ENCODE measurements at regions of chr1 and their contacts with region 1.

Region 1: GRCh38 chr1:165768513-165769394 is at the start of gene TMCO1:
- DNase-seq: peak; percentile 90 to 99 (median 95)
- ATAC-seq: peak; percentile 96
- H3K4me3 ChIP-seq: peak within 1 kb of the TSS; percentile 73
- H3K27ac ChIP-seq: peak within 1 kb of the TSS; percentile 96
- H3K4me1 ChIP-seq: peaks cover 21 to 44% of the 10 kb centered on the region in 2 experiments
- H3K27me3 ChIP-seq: no peaks in the 10 kb centered on the region
- CTCF ChIP-seq: peak; percentile 27 to 45 (median 35); a peak in 4 of 6 replicates
- EP300 ChIP-seq: peak; percentile 62
- POLR2A ChIP-seq: peak; percentile 98
- RAD21 ChIP-seq: peak in 1 of 2 experiments; percentile 24; a peak in 1 of 4 replicates
- polyA plus RNA-seq, gene TMCO1: 412 to 561 TPM

Region 2: GRCh38 chr1:165753934-165754333 is 14.8 kb before region 1 on chr1:
- CTCF ChIA-PET with region 1: interaction called, 4 read pairs
- POLR2A ChIA-PET with region 1: interaction called, 13 read pairs
- in situ Hi-C with region 1: no loop called
- intact Hi-C with region 1: no loop called
- DNase-seq: no peak
- ATAC-seq: no peak
- H3K4me3 ChIP-seq: no peak overlapping the region
- H3K27ac ChIP-seq: no peak overlapping the region
- H3K4me1 ChIP-seq: no peaks in the 10 kb centered on the region
- H3K27me3 ChIP-seq: no peaks in the 10 kb centered on the region; a peak in 1 of 5 replicates
- CTCF ChIP-seq: no peak
- EP300 ChIP-seq: no peak
- POLR2A ChIP-seq: no peak
- RAD21 ChIP-seq: no peak

Region 3: DNA sequence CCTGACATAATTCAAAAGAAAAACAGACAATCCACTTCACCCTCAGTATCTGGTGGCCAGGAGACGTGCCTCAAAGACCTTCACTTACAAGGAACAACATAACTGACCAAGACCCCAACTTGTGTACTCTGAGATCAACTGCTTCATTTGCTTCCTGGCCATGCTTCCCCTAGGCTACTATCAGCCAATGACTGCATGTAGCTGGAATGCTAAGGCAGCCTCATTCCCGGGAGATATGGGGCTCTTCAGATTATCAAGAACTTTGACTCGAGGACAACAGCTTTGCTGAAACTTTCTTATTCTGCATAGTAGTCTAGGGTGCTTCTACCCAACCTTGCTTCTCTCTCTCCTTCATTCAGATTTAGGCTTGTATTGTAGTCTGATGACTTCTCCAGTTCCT is 47.0 kb after region 1 on chr1:
- CTCF ChIA-PET with region 1: no interaction called
- POLR2A ChIA-PET with region 1: interaction called, 17 read pairs
- in situ Hi-C with region 1: no loop called
- intact Hi-C with region 1: no loop called
- DNase-seq: peak in 3 of 4 experiments; percentile 30 to 51 (median 34)
- ATAC-seq: peak; percentile 37
- H3K4me3 ChIP-seq: no peak overlapping the region
- H3K27ac ChIP-seq: no peak overlapping the region
- H3K4me1 ChIP-seq: peaks cover 16 to 19% of the 10 kb centered on the region in 2 experiments
- H3K27me3 ChIP-seq: no peaks in the 10 kb centered on the region
- CTCF ChIP-seq: no peak
- EP300 ChIP-seq: no peak
- POLR2A ChIP-seq: no peak
- RAD21 ChIP-seq: no peak

Region 4: DNA sequence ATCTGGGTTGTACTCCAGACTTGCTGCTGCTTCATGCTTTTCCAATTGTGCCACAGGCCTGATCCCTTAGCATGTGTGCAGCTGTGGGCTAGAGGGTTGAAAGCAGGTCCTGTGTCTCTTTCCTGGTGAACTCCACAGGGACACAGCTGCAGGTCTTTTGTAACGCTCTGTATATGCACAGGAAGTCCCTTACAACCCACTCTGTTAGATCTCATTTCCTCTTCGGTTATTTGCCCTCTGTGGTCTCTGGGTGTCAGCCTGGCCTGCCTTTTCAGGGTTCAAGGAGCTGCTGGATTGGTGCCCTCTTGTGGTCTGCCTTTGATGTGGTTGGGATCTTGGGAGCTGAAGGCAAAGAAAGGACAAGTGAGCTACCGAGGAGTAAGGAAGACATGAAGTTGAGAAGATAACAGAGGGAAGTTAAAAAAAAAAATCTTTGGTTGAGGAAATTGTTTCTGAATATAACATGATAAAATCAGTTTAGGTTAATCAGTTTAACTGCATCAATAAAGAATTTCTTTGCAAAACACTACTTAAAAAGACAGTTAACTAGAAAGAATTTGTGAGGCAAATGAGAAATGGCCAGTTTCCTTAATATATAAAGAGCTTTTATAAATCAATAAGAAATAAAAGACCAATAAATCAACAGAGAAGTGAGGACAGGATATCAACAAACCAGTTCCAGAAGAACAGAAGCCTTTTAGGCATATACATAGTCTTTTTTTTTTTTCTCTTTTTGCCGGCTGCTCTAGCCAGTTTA is 102.7 kb after region 1 on chr1:
- CTCF ChIA-PET with region 1: no interaction called
- POLR2A ChIA-PET with region 1: interaction called, 4 read pairs
- in situ Hi-C with region 1: no loop called
- intact Hi-C with region 1: loop called (anchors 2 kb)
- DNase-seq: peak; percentile 63 to 86 (median 66)
- ATAC-seq: peak; percentile 90
- H3K4me3 ChIP-seq: no peak overlapping the region
- H3K27ac ChIP-seq: peak overlapping the region; percentile 27; the same call in 1 of the 3 replicates
- H3K4me1 ChIP-seq: peaks cover 2 to 3% of the 10 kb centered on the region in 2 experiments; a peak in 2 of 5 replicates
- H3K27me3 ChIP-seq: no peaks in the 10 kb centered on the region
- CTCF ChIP-seq: peak; percentile 66 to 88 (median 73)
- EP300 ChIP-seq: no peak
- POLR2A ChIP-seq: no peak
- RAD21 ChIP-seq: peak; percentile 81 to 82